ENCODE measurements at regions of chr19 and their contacts with region 1.

Region 1: DNA sequence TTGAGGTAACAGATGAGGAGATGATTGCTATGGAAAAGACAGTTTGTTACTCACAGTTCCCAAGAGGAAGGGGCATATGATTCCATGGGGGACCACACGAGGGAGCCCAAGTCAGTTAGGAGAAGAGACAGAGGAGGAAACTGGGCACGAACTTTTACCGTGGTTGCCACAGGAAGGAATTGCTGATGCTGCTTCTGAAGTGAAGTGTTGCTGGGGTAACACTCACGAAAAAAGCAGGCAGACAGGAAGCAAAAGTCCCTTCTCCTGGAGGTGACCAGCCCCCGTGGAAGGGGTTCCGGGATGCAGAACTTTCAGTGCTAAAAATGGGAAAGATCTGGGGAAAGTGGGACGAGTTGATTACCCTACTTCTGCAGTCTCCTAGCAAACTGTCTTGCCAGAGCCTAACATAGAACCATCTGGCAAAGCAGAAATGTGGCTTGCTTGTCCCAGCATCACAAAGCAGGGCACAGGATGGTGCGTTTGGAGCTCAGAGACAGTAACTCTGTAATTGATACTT is 35.4 kb upstream of the MAP3K10 start:
- DNase-seq: peak; percentile 99
- ATAC-seq: peak; percentile 90
- H3K4me3 ChIP-seq: peak overlapping the region in 1 of 2 experiments; percentile 5; a peak in 2 of 4 replicates
- H3K27ac ChIP-seq: no peak overlapping the region
- H3K4me1 ChIP-seq: 0 out of 2 replicates have a peak, but pooled peaks cover 2% of the 10 kb centered on the region
- H3K27me3 ChIP-seq: no peaks in the 10 kb centered on the region
- CTCF ChIP-seq: no peak

Region 2: DNA sequence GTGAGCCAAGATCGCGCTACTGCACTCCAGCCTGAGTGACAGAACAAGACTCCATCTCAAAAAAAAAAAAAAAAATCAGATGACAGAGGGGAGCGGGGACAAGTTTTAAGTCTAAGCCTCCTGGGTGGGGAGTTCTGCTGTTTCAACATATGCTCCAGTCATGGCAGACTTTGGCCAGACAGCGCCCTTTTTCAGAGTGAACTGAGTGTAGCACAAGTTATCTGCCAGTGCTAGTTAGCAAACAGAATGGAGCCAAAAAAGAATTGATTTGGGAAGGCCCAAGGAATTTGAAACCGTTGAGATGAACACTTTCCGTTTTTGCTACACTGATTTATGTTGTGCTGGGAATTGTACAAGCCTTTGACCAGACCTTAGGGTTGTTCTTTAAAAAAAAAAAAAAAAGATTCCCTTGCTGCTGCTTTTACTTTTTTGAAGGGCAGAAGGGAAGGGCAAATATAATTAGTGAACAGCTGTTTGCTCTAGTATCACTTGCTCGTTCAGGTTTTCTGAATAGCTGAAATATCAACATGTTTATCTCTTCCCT is 1502.7 kb before region 1 on chr19:
- CTCF ChIA-PET with region 1: no interaction called
- POLR2A ChIA-PET with region 1: interaction called, 11 read pairs
- in situ Hi-C with region 1: no loop called
- intact Hi-C with region 1: no loop called
- DNase-seq: no peak
- ATAC-seq: no peak
- H3K4me3 ChIP-seq: peak overlapping the region; percentile 50 to 68
- H3K27ac ChIP-seq: peak overlapping the region; percentile 96
- H3K4me1 ChIP-seq: peaks cover 73% of the 10 kb centered on the region
- H3K27me3 ChIP-seq: no peaks in the 10 kb centered on the region
- CTCF ChIP-seq: no peak

Region 3: DNA sequence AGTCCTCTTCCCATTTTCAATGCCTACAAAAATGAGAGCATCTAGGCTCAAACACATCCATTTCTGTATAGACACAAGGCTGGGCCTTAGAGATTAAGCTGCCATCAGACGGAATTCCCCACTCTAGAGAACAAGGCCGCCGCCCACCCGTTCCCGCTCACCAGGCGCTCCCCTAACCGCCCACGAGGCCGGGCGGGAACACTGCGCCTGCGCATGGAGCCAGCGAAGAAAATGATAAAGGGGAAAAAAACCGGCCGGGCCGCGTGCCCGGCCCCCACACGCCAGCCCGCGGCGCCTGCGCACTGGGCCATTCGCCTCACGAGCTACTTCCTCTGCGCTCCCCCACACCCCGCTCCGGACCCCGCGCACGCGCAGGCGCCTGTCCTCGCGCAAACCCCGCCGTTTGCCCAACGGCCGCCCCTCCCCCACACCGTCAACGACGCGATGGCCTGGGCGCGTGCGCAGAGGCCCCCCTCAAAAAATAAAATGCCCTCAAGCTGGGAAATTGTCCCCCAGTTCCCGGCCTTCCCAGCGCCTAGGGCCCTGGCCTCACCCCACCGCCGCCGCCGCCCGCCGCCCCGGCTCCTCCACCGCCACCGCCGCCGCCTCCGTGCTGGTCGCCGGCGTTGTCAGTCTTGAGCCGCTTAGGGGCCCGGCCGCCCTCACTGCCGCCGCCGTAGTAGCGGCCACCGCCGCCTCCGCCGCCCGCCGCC is 1306.5 kb before region 1 on chr19:
- CTCF ChIA-PET with region 1: no interaction called
- POLR2A ChIA-PET with region 1: no interaction called
- in situ Hi-C with region 1: no loop called
- intact Hi-C with region 1: no loop called
- DNase-seq: peak; percentile 99
- ATAC-seq: peak; percentile 39
- H3K4me3 ChIP-seq: peak overlapping the region; percentile 57 to 68
- H3K27ac ChIP-seq: peak overlapping the region; percentile 99
- H3K4me1 ChIP-seq: peaks cover 53% of the 10 kb centered on the region
- H3K27me3 ChIP-seq: no peaks in the 10 kb centered on the region
- CTCF ChIP-seq: no peak

Region 4: GRCh38 chr19:39778763-39779162 is 377.0 kb before region 1 on chr19 and contains the start of gene LEUTX:
- CTCF ChIA-PET with region 1: interaction called, 11 read pairs
- POLR2A ChIA-PET with region 1: no interaction called
- in situ Hi-C with region 1: no loop called
- intact Hi-C with region 1: no loop called
- DNase-seq: no peak
- ATAC-seq: no peak
- H3K4me3 ChIP-seq: no peak within 1 kb of the TSS
- H3K27ac ChIP-seq: no peak within 1 kb of the TSS
- H3K4me1 ChIP-seq: no peaks in the 10 kb centered on the region
- H3K27me3 ChIP-seq: peaks cover 86% of the 10 kb centered on the region
- CTCF ChIP-seq: no peak
- total RNA-seq, gene LEUTX: not detected

Region 5: DNA sequence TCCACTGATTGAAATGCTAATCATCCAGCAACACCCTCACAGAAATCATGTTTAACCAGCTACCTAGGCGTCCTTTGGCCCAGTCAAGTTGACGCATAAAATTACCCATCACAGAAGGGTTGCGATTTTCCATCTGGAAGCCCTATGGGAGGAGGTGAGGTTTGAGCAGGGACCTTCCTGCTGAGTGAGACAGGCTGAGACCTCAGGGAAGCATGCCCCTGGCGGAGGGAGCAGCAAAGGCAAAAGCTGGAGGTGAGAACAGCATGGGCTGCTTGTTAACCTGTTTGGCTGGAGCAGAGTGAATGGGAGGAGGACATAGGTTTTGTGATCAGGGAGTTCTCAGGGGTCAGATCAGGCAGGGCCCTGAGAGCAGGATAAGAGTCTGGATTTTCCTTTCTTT is 55.1 kb after region 1 on chr19:
- CTCF ChIA-PET with region 1: interaction called, 13 read pairs
- POLR2A ChIA-PET with region 1: no interaction called
- in situ Hi-C with region 1: no loop called
- intact Hi-C with region 1: no loop called
- DNase-seq: no peak
- ATAC-seq: 0 out of 2 replicates have a peak, but pooled peaks have one; percentile 2
- H3K4me3 ChIP-seq: no peak overlapping the region
- H3K27ac ChIP-seq: no peak overlapping the region
- H3K4me1 ChIP-seq: no peaks in the 10 kb centered on the region
- H3K27me3 ChIP-seq: no peaks in the 10 kb centered on the region
- CTCF ChIP-seq: no peak

Region 6: GRCh38 chr19:40231544-40232424 is 76.0 kb after region 1 on chr19:
- CTCF ChIA-PET with region 1: interaction called, 10 read pairs
- POLR2A ChIA-PET with region 1: no interaction called
- in situ Hi-C with region 1: no loop called
- intact Hi-C with region 1: no loop called
- DNase-seq: no peak
- ATAC-seq: peak; percentile 62
- H3K4me3 ChIP-seq: no peak overlapping the region
- H3K27ac ChIP-seq: peak overlapping the region; percentile 35
- H3K4me1 ChIP-seq: peaks cover 35% of the 10 kb centered on the region
- H3K27me3 ChIP-seq: peaks cover under 1% of the 10 kb centered on the region; the same call in 1 of the 2 replicates
- CTCF ChIP-seq: no peak

Region 7: GRCh38 chr19:40257057-40257517 is 101.3 kb after region 1 on chr19:
- CTCF ChIA-PET with region 1: interaction called, 13 read pairs
- POLR2A ChIA-PET with region 1: interaction called, 8 read pairs
- in situ Hi-C with region 1: no loop called
- intact Hi-C with region 1: no loop called
- DNase-seq: no peak
- ATAC-seq: peak; percentile 51
- H3K4me3 ChIP-seq: no peak overlapping the region
- H3K27ac ChIP-seq: no peak overlapping the region
- H3K4me1 ChIP-seq: peaks cover 12% of the 10 kb centered on the region
- H3K27me3 ChIP-seq: no peaks in the 10 kb centered on the region
- CTCF ChIP-seq: no peak

Measured in Panc1 (cell line).